Activated CD4-positive, alpha-beta memory T cell treated with anti-CD3 and anti-CD28 coated beads for 36 hours (primary cell): ENCODE measurements at regions of chr11 and their contacts with region 1.

Region 1: GRCh38 chr11:73177778-73178577 is 35.9 kb upstream of the FCHSD2 start:
- DNase-seq: peak; percentile 86
- H3K4me3 Mint-ChIP-seq: no peak overlapping the region
- H3K27ac Mint-ChIP-seq: no peak overlapping the region
- H3K4me1 Mint-ChIP-seq: no peaks in the 10 kb centered on the region
- H3K27me3 Mint-ChIP-seq: peaks cover 2% of the 10 kb centered on the region

Region 2: GRCh38 chr11:72831513-72832300 is 346.3 kb before region 1 on chr11:
- CTCF ChIA-PET with region 1: interaction called, 138 read pairs
- POLR2A ChIA-PET with region 1: no interaction called
- intact Hi-C with region 1: loop called (anchors 1 kb)
- DNase-seq: peak; percentile 69
- H3K4me3 Mint-ChIP-seq: no peak overlapping the region
- H3K27ac Mint-ChIP-seq: peak overlapping the region; percentile 18
- H3K4me1 Mint-ChIP-seq: peaks cover 16% of the 10 kb centered on the region
- H3K27me3 Mint-ChIP-seq: no peaks in the 10 kb centered on the region

Region 3: GRCh38 chr11:72864702-72865655 is 313.0 kb before region 1 on chr11:
- CTCF ChIA-PET with region 1: interaction called, 11 read pairs
- POLR2A ChIA-PET with region 1: no interaction called
- intact Hi-C with region 1: no loop called
- DNase-seq: no peak
- H3K4me3 Mint-ChIP-seq: no peak overlapping the region
- H3K27ac Mint-ChIP-seq: no peak overlapping the region
- H3K4me1 Mint-ChIP-seq: peaks cover 8% of the 10 kb centered on the region
- H3K27me3 Mint-ChIP-seq: no peaks in the 10 kb centered on the region

Region 4: DNA sequence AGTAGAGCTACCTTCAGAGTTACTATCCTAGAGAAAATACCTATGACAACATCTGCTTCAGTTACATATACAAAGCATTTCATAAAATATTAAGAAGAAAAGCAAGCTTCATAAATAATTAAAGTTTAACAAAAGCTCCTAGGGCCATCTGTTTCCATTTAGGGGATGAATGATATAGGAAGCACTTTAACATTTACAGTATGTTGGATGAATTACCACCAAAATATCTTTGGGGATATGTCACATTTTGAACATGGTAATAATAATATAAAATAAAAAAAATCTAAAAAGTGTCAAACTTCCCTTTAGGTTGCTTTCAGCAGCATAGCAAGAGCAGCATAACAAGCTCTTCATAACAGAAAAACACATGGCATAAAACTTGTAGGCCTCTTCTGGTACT is 259.1 kb before region 1 on chr11:
- CTCF ChIA-PET with region 1: interaction called, 96 read pairs
- POLR2A ChIA-PET with region 1: no interaction called
- intact Hi-C with region 1: loop called (anchors 1 kb)
- DNase-seq: no peak
- H3K4me3 Mint-ChIP-seq: no peak overlapping the region
- H3K27ac Mint-ChIP-seq: no peak overlapping the region
- H3K4me1 Mint-ChIP-seq: no peaks in the 10 kb centered on the region
- H3K27me3 Mint-ChIP-seq: no peaks in the 10 kb centered on the region

Region 5: DNA sequence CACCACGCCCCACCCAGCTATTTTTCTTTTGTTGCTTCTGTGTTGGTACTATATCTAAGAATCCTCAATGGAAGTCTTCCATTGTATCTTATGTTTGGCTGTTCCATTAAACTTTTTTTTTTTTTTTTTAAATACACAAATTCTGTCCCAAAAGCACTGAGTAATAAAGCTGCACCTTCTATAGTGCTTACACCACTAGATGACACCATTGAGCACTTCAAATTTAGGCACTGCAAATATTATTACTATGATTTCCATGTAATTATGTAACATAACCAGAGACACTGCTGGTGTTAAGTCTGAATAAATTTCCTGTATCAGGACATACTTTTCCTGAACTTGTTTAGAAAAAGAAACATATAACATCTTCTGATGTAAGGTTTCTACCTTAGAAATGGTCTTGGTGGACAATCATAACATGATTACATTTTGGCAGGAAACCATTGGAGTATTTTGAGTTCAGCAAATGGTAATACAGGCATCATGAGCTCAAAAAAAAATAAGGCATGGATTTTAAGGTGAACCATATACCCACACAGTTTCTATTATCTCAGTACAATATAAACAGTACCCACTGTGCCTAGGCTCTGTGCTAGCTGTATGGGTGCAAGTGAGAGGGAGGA is 253.3 kb before region 1 on chr11:
- CTCF ChIA-PET with region 1: interaction called, 96 read pairs
- POLR2A ChIA-PET with region 1: no interaction called
- intact Hi-C with region 1: loop called (anchors 1 kb)
- DNase-seq: no peak
- H3K4me3 Mint-ChIP-seq: no peak overlapping the region
- H3K27ac Mint-ChIP-seq: peak overlapping the region; percentile 49
- H3K4me1 Mint-ChIP-seq: peaks cover 2% of the 10 kb centered on the region
- H3K27me3 Mint-ChIP-seq: no peaks in the 10 kb centered on the region

Region 6: DNA sequence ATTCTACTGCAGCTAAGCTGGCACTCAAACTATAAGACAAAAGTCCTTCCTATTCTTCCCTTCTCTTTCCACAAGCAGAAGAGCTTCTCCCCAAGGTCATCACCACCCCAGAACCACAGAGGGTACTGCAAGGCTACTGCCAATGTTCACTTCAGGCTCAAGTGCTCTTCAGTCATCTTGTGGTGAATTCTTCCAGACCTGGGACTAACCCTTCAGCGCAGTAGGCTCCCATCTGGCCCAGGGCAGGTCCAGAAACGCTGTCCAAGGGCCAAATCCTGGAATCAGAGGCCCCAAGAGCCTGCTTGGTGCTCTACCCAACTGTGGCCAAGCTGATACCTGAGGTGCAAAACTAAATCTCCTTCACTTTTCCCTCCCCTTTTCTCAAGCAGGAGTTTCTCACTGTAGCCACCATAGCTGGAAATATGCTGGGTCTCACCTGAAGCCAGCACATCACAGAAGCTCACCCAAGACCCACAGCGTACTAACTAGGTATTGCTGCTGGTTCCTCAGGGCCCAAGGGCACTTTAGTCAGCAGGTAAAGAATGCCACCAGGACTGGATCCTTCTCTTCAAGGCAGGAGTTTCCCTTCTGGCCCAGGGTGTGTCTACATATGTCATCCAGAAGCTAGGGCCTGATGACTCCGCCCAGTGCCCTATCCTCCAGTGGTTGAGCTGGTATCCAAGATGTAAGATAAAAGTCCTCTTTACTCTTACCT is 63.7 kb before region 1 on chr11:
- CTCF ChIA-PET with region 1: no interaction called
- POLR2A ChIA-PET with region 1: no interaction called
- intact Hi-C with region 1: no loop called
- DNase-seq: no peak
- H3K4me3 Mint-ChIP-seq: no peak overlapping the region
- H3K27ac Mint-ChIP-seq: no peak overlapping the region
- H3K4me1 Mint-ChIP-seq: no peaks in the 10 kb centered on the region
- H3K27me3 Mint-ChIP-seq: no peaks in the 10 kb centered on the region

Region 7: DNA sequence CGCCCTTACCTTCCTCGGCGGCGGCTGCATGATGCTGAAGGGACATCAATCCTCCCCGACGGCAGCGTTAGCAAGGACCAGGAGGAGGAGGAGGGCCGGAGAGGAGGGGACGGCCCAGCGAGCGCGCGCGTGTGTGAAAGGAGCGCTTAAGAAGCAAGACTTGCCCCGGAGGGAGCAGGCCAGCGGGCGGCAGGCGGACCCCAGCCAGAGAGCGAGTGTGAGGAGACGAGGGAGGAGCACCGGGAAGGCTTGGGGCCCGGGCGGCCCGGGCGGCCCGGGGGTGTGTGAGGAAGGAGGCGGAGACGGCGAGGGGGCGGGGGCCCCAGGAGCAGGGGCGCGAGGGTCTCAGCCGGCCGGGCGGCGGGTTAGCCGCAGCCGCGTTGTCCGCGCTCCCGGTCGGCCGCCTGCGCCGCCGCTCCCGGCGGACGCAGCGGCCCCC is 36.1 kb before region 1 on chr11:
- CTCF ChIA-PET with region 1: interaction called, 19 read pairs
- POLR2A ChIA-PET with region 1: interaction called, 3 read pairs
- intact Hi-C with region 1: loop called (anchors 2 kb)
- DNase-seq: peak; percentile 65
- H3K4me3 Mint-ChIP-seq: peak overlapping the region; percentile 90
- H3K27ac Mint-ChIP-seq: peak overlapping the region; percentile 88
- H3K4me1 Mint-ChIP-seq: peaks cover 36% of the 10 kb centered on the region
- H3K27me3 Mint-ChIP-seq: no peaks in the 10 kb centered on the region

Region 8: DNA sequence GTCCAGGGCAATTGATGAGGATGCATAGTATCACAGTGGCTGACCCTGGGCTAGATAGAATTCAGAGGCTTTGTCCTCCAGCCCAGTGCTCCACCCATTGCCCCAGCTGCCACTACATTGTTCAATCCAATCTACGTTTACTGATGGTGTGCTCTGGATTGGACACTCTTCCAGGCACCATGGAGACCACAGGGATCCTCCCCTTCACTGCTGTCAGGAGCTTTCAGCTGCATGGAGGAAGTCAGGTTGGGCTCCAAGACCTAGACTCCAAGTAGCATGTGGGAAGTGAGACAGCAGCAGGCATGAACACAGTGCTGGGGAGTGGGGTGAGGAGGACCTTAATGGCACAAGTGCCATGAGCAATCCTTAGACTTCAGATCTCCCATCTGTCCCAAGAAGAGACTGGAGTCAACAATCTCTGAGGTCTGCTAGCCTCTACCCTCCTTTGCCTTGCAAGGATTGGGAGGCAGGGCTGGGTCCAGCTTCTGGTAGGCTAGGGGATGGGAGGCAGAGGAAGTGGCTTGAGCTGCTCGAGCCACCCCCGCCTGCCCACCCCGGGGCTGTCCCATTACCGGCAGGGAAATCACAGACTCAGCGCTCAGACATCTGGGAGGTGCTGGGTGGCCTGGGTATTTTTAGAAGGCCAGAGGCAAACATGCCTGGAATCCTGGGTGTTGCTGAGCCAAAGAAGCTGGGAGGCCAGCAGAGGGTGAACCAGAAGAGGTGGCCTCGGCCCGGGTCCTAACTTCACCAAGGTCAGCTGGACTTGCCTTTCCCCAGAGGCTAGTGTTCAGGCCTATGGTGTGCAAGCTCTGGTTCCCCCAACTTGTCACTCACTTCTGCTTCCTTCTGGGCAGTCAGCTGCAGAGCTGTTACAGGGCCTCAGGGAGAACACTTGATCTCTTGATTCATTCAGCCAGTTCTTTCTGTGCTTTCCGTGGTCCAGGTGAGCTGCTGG is 20.6 kb before region 1 on chr11:
- CTCF ChIA-PET with region 1: interaction called, 11 read pairs
- POLR2A ChIA-PET with region 1: no interaction called
- intact Hi-C with region 1: no loop called
- DNase-seq: peak; percentile 33
- H3K4me3 Mint-ChIP-seq: no peak overlapping the region
- H3K27ac Mint-ChIP-seq: no peak overlapping the region
- H3K4me1 Mint-ChIP-seq: peaks cover 39% of the 10 kb centered on the region
- H3K27me3 Mint-ChIP-seq: no peaks in the 10 kb centered on the region

Region 9: DNA sequence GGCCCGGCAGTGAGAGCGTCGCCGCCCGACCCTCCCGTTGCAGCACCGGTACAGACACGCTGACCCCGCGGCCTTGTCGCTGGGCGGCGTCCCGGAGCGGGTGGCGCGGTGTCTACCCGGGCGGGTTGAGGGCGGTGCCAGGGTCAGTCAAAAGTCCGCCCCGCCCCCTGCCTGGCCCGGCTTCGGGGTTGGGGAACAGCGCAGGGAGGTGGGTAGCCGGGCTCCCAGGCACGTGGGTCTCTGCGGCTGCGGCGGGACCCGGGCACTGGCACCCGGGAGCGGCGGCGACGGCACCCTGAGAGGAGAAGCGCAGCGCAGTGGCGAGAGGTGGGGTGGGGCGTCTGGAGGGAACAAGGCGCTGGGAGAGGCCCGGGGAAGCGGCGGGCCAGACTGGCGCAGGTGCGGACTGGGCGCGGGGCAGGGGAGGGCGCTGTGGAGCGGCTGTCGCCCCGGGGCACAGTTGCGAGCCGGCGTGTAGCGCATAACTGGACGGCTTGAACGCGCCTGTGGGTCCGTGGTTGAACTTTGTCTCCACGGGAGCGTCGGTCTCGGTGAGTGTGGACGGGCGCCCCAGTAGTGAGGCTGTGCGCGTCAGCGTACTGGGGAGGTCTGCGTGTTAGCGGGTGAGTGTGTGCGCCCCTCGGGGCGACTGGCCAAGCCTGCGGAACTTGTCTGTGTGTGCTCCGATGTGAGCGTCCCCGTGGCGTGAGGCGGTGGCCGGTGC is 40.3 kb after region 1 on chr11 and contains the start of gene P2RY2:
- CTCF ChIA-PET with region 1: no interaction called
- POLR2A ChIA-PET with region 1: no interaction called
- intact Hi-C with region 1: no loop called
- DNase-seq: peak; percentile 55
- H3K4me3 Mint-ChIP-seq: peak within 1 kb of the TSS; percentile 38
- H3K27ac Mint-ChIP-seq: no peak within 1 kb of the TSS
- H3K4me1 Mint-ChIP-seq: peaks cover 7% of the 10 kb centered on the region
- H3K27me3 Mint-ChIP-seq: peaks cover 20% of the 10 kb centered on the region
- total RNA-seq, gene P2RY2: not detected